ENCODE measurements at regions of chr11 and their contacts with region 1.

Region 1: GRCh38 chr11:93249459-93250220 is 51.8 kb upstream of the SLC36A4 start:
- DNase-seq: no peak
- ATAC-seq: no peak
- H3K4me3 ChIP-seq: no peak overlapping the region
- H3K4me1 ChIP-seq: no peaks in the 10 kb centered on the region
- CTCF ChIP-seq: no peak

Region 2: DNA sequence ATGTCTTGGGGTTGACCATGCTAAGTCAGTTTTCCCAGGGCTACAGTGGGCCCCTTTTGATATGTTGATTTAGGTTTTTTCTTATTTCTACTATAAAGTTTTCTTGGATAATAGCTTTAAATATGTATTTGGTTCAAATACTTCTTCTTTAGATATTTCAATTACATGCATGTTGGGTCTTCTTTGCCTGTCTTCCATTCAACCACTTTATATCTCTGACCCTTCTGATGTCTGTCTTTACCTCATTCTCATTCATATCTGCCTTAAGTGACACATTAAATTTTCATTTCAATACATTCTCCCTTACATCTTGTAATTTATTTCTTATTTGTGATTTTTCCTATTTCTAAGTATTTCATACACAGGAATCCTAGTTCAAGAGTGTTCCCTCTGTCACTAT is 62.4 kb before region 1 on chr11:
- intact Hi-C with region 1: no loop called
- DNase-seq: no peak
- ATAC-seq: no peak
- H3K4me3 ChIP-seq: no peak overlapping the region
- H3K4me1 ChIP-seq: no peaks in the 10 kb centered on the region
- CTCF ChIP-seq: no peak

Region 3: DNA sequence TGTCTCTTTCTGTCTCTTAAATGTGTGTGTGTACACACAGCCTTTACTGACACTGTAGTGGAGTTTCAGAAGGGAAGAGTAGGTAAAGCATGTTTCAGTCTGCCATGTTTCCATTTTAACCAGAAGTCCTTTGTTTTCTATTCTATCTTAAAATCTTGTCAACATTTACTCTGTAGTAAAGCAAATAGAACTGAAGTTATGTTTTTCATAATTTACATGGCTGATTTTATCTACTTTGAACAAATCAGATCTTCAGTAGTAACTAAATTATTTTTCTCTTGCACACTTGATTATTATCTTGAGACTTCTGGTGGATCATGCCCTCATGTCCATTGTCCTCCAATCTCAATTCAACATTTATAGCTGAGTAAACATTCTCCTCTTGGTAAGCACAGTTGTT is 67.5 kb after region 1 on chr11:
- intact Hi-C with region 1: loop called in 1 of 2 experiments (anchors 10 kb)
- DNase-seq: no peak
- ATAC-seq: no peak
- H3K4me3 ChIP-seq: no peak overlapping the region
- H3K4me1 ChIP-seq: no peaks in the 10 kb centered on the region
- CTCF ChIP-seq: no peak

Region 4: DNA sequence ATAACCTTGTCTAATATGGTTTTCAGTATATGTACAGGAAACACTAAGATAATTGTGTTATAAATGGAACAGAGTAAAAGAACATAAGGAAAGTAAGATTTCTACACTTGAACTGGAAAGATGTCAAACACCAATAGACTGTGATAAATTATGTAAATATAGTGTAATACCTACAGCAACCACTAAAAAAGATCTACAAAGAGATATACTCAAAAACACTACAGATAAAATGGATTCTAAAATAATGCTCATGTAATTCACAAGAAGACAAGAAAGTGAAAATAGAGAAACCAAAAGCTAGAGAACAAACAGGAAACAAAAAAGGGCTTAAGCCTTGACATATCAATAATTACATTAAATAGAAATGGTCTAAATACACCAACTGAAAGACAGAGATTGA is 111.8 kb after region 1 on chr11:
- intact Hi-C with region 1: no loop called
- DNase-seq: no peak
- ATAC-seq: no peak
- H3K4me3 ChIP-seq: no peak overlapping the region
- H3K4me1 ChIP-seq: no peaks in the 10 kb centered on the region
- CTCF ChIP-seq: no peak

Region 5: GRCh38 chr11:93577286-93577685 is 327.6 kb after region 1 on chr11:
- intact Hi-C with region 1: no loop called
- DNase-seq: no peak
- ATAC-seq: no peak
- H3K4me3 ChIP-seq: no peak overlapping the region
- H3K4me1 ChIP-seq: no peaks in the 10 kb centered on the region
- CTCF ChIP-seq: no peak

Measured in mucosa of descending colon (tissue), 3 donors.